Activated CD4-positive, alpha-beta T cell treated with anti-CD3 and anti-CD28 coated beads, Interleukin-2, amount 10 ng/mL, durations not matched to agents 24 days and 14 days (primary cell): ENCODE measurements at regions of chr12 and their contacts with region 1.

Region 1: GRCh38 chr12:12716793-12717585 is at the start of gene CDKN1B:
- DNase-seq: peak; percentile 94
- H3K4me3 Mint-ChIP-seq: peak within 1 kb of the TSS; percentile 97
- H3K27ac Mint-ChIP-seq: peak within 1 kb of the TSS; percentile 99
- H3K4me1 Mint-ChIP-seq: peaks cover 57% of the 10 kb centered on the region
- H3K27me3 Mint-ChIP-seq: no peaks in the 10 kb centered on the region
- total RNA-seq, gene CDKN1B: 47.4 and 48.5 TPM in 2 replicates

Region 2: DNA sequence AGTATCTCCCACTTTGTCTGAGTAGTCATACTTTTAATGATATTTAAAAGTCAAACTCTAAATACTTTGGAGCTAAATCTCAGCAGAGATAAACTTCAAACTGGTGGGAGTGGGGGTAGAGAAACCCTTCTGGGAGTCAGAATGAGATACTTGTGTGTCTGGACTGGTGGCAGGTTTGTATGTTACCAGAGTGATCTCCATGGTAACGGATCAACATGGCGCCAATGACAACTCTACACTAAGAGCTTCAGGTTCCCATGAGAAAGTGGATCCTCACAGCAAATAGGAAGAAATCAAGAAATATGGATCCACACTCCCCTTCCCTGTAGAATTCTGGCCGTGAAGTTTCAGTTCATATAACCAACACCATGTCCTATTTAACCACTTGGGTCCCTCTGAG is 945.6 kb before region 1 on chr12:
- intact Hi-C with region 1: loop called (anchors 5 kb)
- DNase-seq: peak; percentile 65
- H3K4me3 Mint-ChIP-seq: peak overlapping the region; percentile 26
- H3K27ac Mint-ChIP-seq: peak overlapping the region; percentile 97
- H3K4me1 Mint-ChIP-seq: peaks cover 78% of the 10 kb centered on the region
- H3K27me3 Mint-ChIP-seq: no peaks in the 10 kb centered on the region

Region 3: DNA sequence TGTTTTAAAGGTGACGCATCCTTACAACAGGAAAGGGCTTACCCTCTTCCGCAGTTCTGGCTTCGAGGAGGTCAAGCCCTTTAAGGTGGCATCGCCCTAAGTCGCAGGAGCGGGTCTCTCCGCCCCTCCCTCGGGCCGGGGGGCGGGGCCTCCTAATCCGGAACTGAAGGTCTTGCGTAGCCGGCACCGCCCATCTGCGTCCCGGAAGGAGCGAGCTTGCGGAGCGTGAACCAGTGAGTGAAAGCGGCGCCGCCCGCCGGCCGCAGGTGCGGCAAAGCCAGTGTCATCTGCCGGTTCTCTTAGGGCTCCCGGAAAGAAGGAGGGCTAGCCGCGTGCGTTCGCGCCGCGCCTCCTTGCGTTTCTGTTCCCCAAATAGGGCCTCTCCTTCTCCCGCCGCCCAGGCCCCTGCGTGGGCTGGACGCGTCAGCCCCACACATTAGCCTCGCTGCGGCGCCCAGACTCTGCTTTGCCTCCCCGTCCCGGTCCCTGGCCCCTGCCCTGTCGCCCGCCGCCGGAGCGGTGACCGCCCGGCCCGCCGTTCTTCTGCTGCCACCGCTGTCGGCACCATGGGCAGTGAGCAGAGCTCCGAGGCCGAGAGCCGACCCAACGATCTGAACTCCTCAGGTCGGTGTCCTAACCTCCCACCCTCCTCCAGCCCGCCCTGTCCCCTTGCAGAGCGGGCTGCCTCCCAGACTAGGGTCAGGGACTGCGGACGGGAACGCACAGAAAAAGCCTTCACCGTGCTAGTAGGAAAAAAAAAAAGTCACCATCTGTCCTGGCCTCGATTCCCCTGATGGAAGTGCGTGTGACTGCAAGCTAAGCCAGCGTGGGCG is 359.9 kb before region 1 on chr12 and contains the start of gene BORCS5:
- intact Hi-C with region 1: loop called (anchors 1 kb)
- DNase-seq: peak; percentile 100
- H3K4me3 Mint-ChIP-seq: peak within 1 kb of the TSS; percentile 98
- H3K27ac Mint-ChIP-seq: peak within 1 kb of the TSS; percentile 99
- H3K4me1 Mint-ChIP-seq: peaks cover 46% of the 10 kb centered on the region
- H3K27me3 Mint-ChIP-seq: no peaks in the 10 kb centered on the region
- total RNA-seq, gene BORCS5: 34.0 and 37.0 TPM in 2 replicates

Region 4: DNA sequence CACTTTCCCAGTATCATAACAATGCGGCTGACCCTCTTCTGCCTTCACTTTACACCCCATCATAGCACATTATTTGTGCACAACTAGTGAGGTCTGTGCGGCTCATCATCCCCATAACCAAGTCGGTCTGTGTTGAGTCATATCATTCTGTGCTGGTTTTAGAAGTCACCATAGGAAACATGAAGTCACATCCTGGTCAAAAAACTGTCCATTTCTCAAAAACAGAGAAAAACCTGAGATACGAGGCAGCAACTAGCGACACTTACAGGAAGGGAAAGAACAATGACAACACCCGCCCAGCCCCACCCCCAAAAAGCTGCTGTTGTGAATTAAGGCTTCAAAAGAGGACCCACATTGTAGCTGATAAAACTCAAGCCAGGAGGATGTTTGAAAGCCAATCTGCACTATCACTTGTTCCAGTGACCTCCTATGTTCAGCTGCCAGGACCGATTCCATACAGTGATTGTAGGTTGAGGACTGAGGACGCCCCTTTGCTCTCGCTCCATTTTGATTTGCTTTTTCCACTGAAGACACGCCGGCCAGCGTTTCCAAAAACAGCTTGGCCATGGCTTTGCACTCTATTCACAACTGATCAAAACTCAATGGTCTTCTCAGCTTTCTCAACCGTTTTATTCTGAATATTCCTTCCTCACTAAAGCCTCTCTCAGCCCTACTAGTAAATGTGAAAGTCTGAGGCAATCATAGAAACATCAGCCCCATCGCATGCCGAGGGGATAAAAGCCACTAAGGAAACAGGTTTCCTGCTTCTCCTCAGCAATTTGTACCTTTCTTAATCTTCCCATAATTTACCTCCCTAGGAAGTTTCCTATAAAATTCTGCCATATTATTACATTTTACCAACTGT is 241.8 kb before region 1 on chr12:
- intact Hi-C with region 1: loop called (anchors 2 kb)
- DNase-seq: peak; percentile 90
- H3K4me3 Mint-ChIP-seq: peak overlapping the region; percentile 78
- H3K27ac Mint-ChIP-seq: peak overlapping the region; percentile 100
- H3K4me1 Mint-ChIP-seq: peaks cover 59% of the 10 kb centered on the region
- H3K27me3 Mint-ChIP-seq: no peaks in the 10 kb centered on the region

Region 5: GRCh38 chr12:12696562-12697383 is 20.2 kb before region 1 on chr12:
- intact Hi-C with region 1: loop called (anchors 1 kb)
- DNase-seq: peak; percentile 98
- H3K4me3 Mint-ChIP-seq: peak overlapping the region; percentile 94
- H3K27ac Mint-ChIP-seq: peak overlapping the region; percentile 99
- H3K4me1 Mint-ChIP-seq: peaks cover 60% of the 10 kb centered on the region
- H3K27me3 Mint-ChIP-seq: no peaks in the 10 kb centered on the region

Region 6: DNA sequence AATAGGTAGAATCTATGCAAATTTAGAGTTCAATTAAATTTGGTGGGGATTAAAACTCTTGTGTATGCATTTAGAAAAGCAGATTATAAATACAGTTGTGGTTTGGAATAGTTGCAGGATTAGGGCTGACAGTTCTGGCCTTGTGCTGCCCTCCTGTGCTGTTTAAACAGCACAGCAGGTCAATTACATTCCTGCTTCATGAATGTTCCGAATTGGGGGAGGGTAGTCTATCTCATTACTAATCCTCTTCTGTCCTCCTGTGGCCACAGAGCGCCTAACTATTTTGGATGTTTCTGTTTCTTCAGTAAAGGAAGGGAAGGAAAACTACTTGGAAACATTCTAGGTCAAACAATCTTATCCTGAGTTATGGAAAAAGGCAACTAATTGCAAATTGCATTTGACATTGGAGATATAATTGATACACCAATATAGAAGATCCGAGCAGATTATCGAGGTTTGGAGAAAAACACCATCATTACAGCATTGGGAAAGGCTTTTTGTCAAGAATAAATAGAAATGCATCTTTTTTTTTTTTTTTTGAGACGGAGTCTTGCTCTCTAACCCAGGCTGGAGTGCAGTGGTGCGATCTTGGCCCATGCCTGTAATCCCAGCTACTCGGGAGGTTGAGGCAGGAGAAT is 12.3 kb before region 1 on chr12:
- intact Hi-C with region 1: loop called (anchors 1 kb)
- DNase-seq: peak; percentile 77
- H3K4me3 Mint-ChIP-seq: no peak overlapping the region
- H3K27ac Mint-ChIP-seq: no peak overlapping the region
- H3K4me1 Mint-ChIP-seq: peaks cover 28% of the 10 kb centered on the region
- H3K27me3 Mint-ChIP-seq: no peaks in the 10 kb centered on the region

Region 7: DNA sequence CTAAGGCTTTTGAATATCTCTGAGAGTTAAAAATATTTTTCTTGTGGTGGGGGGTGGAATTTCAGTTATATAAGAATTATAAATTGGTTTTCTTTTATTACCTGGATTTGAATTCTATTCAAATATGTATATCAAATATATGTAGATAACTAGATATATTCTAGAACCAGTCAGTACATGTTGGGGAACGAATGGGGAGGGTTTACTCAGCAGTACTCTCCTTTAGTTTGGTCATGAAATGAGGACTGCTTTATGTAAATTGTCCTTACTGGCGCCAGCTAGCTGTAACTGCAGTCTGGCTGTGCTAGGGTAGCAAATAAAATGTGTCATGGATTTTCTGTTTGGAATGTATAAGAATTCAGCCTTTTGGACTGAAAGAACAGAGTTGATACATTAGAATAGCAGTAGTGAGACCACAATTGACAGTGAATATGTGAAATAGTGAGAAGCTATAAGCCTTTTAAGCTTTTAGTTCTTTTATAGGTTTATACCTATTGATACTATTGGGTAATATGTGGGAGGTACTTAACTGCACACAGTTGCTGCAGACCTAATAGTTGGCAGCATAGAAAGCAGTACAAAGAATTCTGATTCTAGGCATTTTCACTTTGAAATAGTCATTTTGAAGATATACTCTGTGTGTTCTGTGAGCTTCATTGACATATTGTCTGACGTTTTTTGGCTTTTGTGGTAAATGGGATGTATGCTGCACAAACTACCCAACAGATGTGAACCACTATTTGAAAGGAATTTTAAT is 1677.5 kb after region 1 on chr12:
- intact Hi-C with region 1: loop called (anchors 5 kb)
- DNase-seq: peak; percentile 84
- H3K4me3 Mint-ChIP-seq: peak overlapping the region; percentile 78
- H3K27ac Mint-ChIP-seq: peak overlapping the region; percentile 93
- H3K4me1 Mint-ChIP-seq: peaks cover 59% of the 10 kb centered on the region
- H3K27me3 Mint-ChIP-seq: no peaks in the 10 kb centered on the region